ENCODE measurements at regions of chr6 and their contacts with region 1.

Region 1: DNA sequence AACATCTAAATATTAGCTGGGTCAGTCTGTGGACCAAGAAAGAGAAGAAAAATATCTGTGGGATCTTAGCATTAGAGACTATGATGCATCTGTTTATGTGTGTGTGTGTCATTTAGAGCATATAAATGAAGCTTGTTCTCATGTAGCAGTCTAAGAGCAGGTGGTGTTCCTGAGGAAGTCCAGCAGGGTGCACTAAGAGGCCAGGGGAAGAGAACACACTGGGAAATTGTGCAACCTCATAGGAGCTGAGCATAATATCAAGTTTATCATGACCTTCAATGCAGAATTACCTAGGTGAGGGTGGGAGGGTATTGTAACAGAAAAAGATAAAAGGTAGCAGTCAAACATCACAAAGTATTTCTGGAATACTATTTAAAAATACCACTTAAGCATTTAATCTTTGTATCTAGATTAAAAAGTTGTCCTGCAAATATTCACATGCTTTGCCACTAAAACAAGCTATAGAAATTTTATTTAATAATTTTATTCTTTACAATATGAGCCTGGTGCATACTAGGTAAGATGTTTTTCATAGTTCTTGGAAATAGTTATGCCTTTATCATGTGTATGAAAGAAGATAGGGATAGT is 80.5 kb downstream of the SMPDL3A start:
- DNase-seq: no peak
- H3K4me3 ChIP-seq: no peak overlapping the region
- H3K27ac ChIP-seq: no peak overlapping the region
- H3K4me1 ChIP-seq: no peaks in the 10 kb centered on the region
- H3K27me3 ChIP-seq: no peaks in the 10 kb centered on the region
- CTCF ChIP-seq: peak; percentile 43 to 77 (median 75)
- EP300 ChIP-seq: no peak
- POLR2A ChIP-seq: no peak
- RAD21 ChIP-seq: peak; percentile 97

Region 2: DNA sequence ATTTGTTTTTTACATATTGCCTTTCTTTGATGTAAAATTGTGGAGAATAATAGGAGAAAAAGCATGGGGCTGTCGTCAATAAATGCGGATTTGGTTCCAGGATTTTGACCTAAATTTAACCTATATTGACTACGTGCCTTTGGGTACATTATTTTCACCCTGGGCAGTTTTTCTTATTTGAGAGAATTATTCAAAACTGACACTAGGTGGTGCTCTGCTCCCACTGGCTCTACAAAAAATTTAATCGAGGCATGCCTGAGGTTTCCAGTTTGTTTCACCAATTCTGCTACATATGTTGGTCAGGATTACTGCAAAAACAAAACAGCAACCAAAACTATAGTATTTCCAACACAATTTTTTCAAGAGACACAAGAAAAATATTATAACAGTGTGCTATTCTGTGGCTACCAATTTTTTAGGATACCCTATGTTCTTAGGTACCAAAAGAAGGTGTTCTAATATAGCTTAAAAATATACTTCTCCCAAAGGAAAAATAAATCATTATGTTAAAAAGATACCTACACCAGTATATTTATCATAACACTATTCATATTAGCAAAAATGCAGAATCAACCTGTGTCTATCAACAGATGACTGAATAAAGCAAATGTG is 138.7 kb before region 1 on chr6:
- CTCF ChIA-PET with region 1: interaction called, 10 read pairs
- POLR2A ChIA-PET with region 1: no interaction called
- DNase-seq: no peak
- H3K4me3 ChIP-seq: no peak overlapping the region
- H3K27ac ChIP-seq: no peak overlapping the region
- H3K4me1 ChIP-seq: peaks cover 3 to 10% (median 7%) of the 10 kb centered on the region in 4 experiments; a peak in 5 of 7 replicates
- H3K27me3 ChIP-seq: no peaks in the 10 kb centered on the region
- CTCF ChIP-seq: peak in 2 of 3 experiments; percentile 54 to 76; a peak in 3 of 4 replicates
- EP300 ChIP-seq: no peak
- POLR2A ChIP-seq: no peak
- RAD21 ChIP-seq: peak; percentile 93

Region 3: GRCh38 chr6:122755916-122756315 is 113.6 kb before region 1 on chr6:
- CTCF ChIA-PET with region 1: no interaction called
- POLR2A ChIA-PET with region 1: no interaction called
- DNase-seq: peak in 1 of 2 experiments; percentile 84
- H3K4me3 ChIP-seq: no peak overlapping the region
- H3K27ac ChIP-seq: no peak overlapping the region
- H3K4me1 ChIP-seq: peaks cover 0 to 4% (median 1%) of the 10 kb centered on the region in 4 experiments; a peak in 1 of 7 replicates
- H3K27me3 ChIP-seq: 0 out of 7 replicates have a peak, but pooled peaks cover 0 to 1% (median 0%) of the 10 kb centered on the region in 4 experiments
- CTCF ChIP-seq: no peak
- EP300 ChIP-seq: no peak
- POLR2A ChIP-seq: no peak
- RAD21 ChIP-seq: no peak

Region 4: DNA sequence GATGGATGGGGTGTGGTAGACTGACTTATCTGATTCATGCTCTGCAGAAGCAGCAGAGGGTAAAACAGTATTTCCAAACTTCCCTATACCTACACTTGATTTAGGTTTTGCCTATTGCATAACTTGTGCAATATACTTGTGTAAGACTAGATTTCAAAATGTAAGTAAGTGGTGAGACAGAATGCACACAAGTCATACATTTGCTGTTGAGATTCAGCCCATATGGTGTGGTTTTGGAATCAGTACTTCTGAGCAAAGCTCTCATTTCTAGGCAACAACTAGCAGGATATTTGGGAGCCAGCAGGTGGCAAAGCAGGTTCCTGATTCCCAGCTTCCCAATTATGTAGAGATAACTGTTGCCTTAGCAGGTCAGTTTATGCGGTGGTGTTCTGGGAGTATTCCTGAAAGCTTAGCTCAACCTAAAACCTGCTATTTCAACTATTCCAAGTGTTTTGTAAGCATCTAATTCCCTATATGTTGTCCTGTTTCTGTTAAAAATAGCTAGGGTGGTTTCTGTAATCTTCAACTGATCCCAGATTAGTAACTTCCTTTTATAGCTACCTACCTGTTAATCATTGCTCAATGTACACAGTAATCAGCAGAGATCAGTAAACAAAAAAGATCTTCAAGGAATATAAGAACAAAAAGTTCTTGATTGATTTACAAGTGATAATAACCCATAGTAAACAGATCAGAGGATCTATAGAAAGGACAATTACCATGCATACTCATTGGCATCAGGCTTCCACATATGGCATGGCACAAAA is 98.5 kb before region 1 on chr6:
- CTCF ChIA-PET with region 1: no interaction called
- POLR2A ChIA-PET with region 1: no interaction called
- DNase-seq: no peak
- H3K4me3 ChIP-seq: no peak overlapping the region
- H3K27ac ChIP-seq: no peak overlapping the region
- H3K4me1 ChIP-seq: no peaks in the 10 kb centered on the region
- H3K27me3 ChIP-seq: no peaks in the 10 kb centered on the region
- CTCF ChIP-seq: peak in 2 of 3 experiments; percentile 32 to 36; a peak in 3 of 4 replicates
- EP300 ChIP-seq: no peak
- POLR2A ChIP-seq: no peak
- RAD21 ChIP-seq: peak; percentile 44 to 52

Region 5: DNA sequence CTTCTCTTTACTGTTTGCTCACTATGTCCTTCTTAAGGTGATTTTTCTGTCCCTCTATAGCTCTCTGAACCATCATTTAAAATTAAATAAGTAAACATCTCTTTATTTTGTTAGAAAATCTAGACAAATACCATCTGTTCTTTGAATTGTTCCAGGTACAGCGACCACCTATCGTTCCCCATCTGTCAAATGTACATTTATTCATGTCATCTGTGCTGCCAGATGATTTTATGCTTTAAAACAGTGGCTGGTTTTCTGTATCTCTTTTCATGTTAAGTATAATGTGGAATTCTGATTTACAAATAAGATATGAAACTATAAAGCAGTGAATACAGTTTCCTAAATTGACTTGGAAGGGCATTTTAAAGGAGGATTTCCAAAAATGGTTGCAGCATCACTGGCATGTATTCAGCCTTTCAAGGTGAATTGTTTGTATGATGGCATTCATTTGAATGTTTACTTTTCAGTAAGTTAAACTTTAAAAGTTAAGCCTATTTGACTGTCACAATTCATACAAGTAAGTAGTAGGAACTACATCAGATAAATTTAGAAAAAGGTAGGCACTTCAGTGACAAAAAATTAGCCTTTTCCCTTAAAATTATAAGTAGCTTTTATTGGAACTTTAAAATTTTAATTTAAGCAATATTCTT is 33.9 kb after region 1 on chr6:
- CTCF ChIA-PET with region 1: no interaction called
- POLR2A ChIA-PET with region 1: no interaction called
- DNase-seq: no peak
- H3K4me3 ChIP-seq: no peak overlapping the region
- H3K27ac ChIP-seq: no peak overlapping the region
- H3K4me1 ChIP-seq: no peaks in the 10 kb centered on the region
- H3K27me3 ChIP-seq: no peaks in the 10 kb centered on the region
- CTCF ChIP-seq: no peak
- EP300 ChIP-seq: no peak
- POLR2A ChIP-seq: no peak
- RAD21 ChIP-seq: no peak

Region 6: GRCh38 chr6:122947355-122947754 is 77.8 kb after region 1 on chr6:
- CTCF ChIA-PET with region 1: interaction called, 13 read pairs
- POLR2A ChIA-PET with region 1: no interaction called
- DNase-seq: peak in 1 of 2 experiments; percentile 47
- H3K4me3 ChIP-seq: no peak overlapping the region
- H3K27ac ChIP-seq: no peak overlapping the region
- H3K4me1 ChIP-seq: no peaks in the 10 kb centered on the region
- H3K27me3 ChIP-seq: no peaks in the 10 kb centered on the region
- CTCF ChIP-seq: peak; percentile 19 to 64 (median 63)
- EP300 ChIP-seq: no peak
- POLR2A ChIP-seq: no peak
- RAD21 ChIP-seq: peak; percentile 69 to 72

Region 7: DNA sequence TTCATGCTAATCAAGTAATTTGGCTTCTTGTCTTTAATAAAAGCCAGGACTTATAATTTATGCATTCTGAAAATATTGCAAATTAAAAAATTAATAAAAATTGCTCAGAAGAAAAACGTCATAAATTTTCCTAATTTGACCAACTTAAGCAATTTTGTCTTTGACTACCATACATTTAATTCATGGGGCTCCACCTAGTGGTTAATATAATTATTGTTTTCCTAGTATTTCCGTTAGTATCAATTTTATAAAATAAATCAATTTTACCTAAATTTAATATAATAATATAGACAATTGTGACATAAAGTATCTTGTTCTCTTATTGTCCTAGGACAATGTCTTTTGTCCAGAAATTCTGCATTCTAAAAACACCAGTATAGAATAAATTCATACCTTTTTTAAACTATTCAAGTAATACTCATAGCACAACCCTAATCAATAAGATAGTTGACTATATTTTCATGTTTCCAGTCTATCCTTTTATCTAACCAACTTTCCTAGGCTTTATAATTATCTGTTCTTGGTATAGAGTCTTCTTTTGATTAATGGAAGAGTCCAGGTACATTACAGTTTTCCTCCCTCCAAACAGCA is 447.3 kb after region 1 on chr6:
- CTCF ChIA-PET with region 1: interaction called, 10 read pairs
- POLR2A ChIA-PET with region 1: no interaction called
- DNase-seq: no peak
- H3K4me3 ChIP-seq: no peak overlapping the region
- H3K27ac ChIP-seq: no peak overlapping the region
- H3K4me1 ChIP-seq: no peaks in the 10 kb centered on the region
- H3K27me3 ChIP-seq: peaks cover 0 to 1% (median 0%) of the 10 kb centered on the region in 4 experiments; a peak in 1 of 7 replicates
- CTCF ChIP-seq: peak in 1 of 3 experiments; percentile 20; a peak in 1 of 4 replicates
- EP300 ChIP-seq: no peak
- POLR2A ChIP-seq: no peak
- RAD21 ChIP-seq: peak in 1 of 2 experiments; percentile 37; a peak in 3 of 4 replicates

Region 8: GRCh38 chr6:123380257-123380656 is 510.7 kb after region 1 on chr6:
- CTCF ChIA-PET with region 1: interaction called, 35 read pairs
- POLR2A ChIA-PET with region 1: no interaction called
- DNase-seq: peak in 1 of 2 experiments; percentile 3
- H3K4me3 ChIP-seq: no peak overlapping the region
- H3K27ac ChIP-seq: no peak overlapping the region
- H3K4me1 ChIP-seq: no peaks in the 10 kb centered on the region
- H3K27me3 ChIP-seq: no peaks in the 10 kb centered on the region
- CTCF ChIP-seq: peak in 2 of 3 experiments; percentile 42 to 45; a peak in 3 of 4 replicates
- EP300 ChIP-seq: no peak
- POLR2A ChIP-seq: no peak
- RAD21 ChIP-seq: peak; percentile 66 to 71

Region 9: DNA sequence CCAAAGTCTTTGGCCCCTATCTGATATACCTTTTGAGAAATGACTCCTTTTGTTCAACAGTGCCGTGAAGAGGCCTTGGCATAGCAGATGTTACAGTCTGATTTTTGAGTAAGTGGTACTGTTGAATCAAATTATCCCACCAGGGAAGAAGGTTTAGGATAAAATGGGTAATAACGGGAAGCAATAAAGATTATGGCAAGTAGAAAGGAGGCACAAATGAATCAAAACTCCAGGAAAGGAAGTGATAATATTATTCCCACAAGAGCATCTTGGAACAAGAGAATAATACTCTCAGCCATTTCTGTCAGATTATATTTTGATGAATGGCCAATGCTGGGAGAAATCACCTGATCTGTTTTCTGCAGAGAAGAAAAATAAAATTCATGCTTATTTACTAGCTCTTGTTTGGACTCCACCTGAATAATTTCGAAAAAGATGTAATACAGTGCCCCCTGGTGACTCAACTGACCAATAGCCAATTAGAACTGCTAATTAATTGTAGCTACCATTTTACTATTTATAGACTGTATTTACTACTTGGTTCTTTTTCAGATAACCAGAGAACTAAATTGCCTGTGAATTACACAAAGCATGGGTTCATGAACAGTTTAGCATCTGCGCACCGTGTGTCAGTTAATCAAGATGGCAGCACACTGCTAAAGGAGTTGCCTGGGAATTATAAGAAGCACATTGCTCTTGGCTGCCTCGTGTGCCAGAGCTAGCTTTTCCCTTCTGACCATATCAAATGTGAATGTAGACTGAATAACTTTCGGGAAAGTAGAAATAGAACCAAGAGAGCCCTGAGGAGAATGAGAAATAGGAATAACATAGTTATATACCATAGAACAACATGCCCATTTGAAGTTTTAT is 845.7 kb after region 1 on chr6:
- CTCF ChIA-PET with region 1: interaction called, 11 read pairs
- POLR2A ChIA-PET with region 1: no interaction called
- DNase-seq: no peak
- H3K4me3 ChIP-seq: no peak overlapping the region
- H3K27ac ChIP-seq: no peak overlapping the region
- H3K4me1 ChIP-seq: no peaks in the 10 kb centered on the region
- H3K27me3 ChIP-seq: no peaks in the 10 kb centered on the region
- CTCF ChIP-seq: peak in 2 of 3 experiments; percentile 47 to 53; a peak in 2 of 4 replicates
- EP300 ChIP-seq: no peak
- POLR2A ChIP-seq: no peak
- RAD21 ChIP-seq: peak; percentile 75 to 77

Measured in H1 (cell line).